H1 (cell line): ENCODE measurements at regions of chr6 and their contacts with region 1.

Region 1: DNA sequence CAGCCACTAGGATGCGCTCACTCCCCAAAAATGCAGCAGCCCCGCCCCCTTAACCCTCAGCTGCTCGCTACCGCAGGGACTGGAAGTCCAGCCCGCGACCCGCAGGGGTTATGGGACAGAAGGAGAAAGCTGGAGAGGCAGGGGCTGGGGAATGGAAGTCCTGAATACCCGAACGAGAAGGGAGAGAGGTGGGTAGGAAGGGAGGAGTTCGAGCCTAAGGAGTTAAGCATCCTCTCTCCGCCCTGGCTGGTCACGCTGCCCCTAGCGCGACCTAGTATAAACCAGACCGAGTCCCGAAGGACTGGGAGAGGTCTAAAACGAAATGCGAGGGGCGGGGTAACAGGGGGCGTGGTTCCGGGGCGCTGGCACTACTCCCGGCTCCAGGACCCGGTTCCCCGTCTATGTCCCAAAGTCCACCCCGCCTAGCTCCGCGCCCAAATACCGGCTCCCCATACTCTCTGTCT is 448 bp upstream of the DDAH2 start:
- DNase-seq: peak; percentile 87 to 96
- H3K4me3 ChIP-seq: peak overlapping the region; percentile 56 to 91 (median 83)
- H3K27ac ChIP-seq: peak overlapping the region; percentile 49; the same call in 1 of the 2 replicates
- H3K4me1 ChIP-seq: peaks cover 8 to 19% (median 11%) of the 10 kb centered on the region in 4 experiments
- H3K27me3 ChIP-seq: no peaks in the 10 kb centered on the region
- CTCF ChIP-seq: peak in 2 of 3 experiments; percentile 86 to 87; a peak in 3 of 4 replicates
- EP300 ChIP-seq: no peak
- POLR2A ChIP-seq: no peak
- RAD21 ChIP-seq: peak; percentile 83 to 90

Region 2: DNA sequence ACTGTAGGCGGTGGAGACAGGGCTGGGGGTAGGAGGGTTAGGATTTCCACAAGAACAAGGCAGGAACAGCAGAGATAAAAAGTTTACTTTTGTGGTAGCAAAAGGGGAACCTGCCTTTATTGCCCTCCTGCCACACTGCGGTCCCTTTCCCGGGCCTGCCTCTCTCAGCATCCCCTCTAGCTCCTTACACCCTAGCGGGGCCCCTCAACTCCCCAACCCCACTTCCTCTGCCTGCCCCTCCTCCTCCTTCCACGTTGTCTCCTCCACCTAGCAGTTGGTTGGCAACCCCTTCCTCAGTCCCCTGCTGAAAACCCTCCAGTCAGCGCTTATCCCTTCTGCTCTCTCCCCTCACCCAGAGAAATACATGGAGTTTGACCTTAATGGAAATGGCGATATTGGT is 113.8 kb before region 1 on chr6:
- CTCF ChIA-PET with region 1: no interaction called
- POLR2A ChIA-PET with region 1: no interaction called
- DNase-seq: no peak
- H3K4me3 ChIP-seq: no peak overlapping the region; a peak in 2 of 8 replicates
- H3K27ac ChIP-seq: no peak overlapping the region
- H3K4me1 ChIP-seq: peaks cover 2 to 12% (median 6%) of the 10 kb centered on the region in 4 experiments; a peak in 6 of 7 replicates
- H3K27me3 ChIP-seq: no peaks in the 10 kb centered on the region
- CTCF ChIP-seq: no peak
- EP300 ChIP-seq: no peak
- POLR2A ChIP-seq: no peak
- RAD21 ChIP-seq: no peak

Region 3: DNA sequence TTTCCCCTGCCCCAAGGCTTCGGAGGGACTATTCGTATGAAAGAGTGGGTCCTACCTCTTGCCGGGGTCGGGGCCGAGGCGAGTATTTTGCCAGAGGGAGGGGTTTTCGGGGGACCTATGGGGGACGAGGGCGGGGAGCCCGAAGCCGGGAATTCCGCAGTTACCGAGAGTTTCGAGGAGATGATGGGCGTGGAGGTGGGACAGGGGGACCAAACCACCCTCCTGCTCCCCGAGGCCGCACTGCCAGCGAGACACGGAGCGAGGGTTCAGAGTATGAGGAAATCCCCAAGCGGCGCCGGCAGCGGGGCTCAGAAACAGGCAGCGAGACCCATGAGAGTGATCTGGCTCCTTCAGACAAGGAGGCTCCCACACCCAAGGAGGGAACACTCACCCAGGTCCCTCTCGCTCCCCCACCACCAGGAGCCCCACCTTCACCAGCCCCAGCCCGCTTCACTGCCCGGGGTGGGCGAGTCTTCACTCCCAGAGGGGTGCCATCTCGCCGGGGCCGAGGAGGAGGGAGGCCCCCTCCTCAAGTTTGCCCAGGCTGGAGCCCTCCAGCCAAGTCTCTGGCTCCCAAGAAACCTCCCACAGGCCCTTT is 97.8 kb before region 1 on chr6:
- CTCF ChIA-PET with region 1: no interaction called
- POLR2A ChIA-PET with region 1: no interaction called
- DNase-seq: no peak
- H3K4me3 ChIP-seq: no peak overlapping the region
- H3K27ac ChIP-seq: no peak overlapping the region
- H3K4me1 ChIP-seq: no peaks in the 10 kb centered on the region
- H3K27me3 ChIP-seq: no peaks in the 10 kb centered on the region
- CTCF ChIP-seq: no peak
- EP300 ChIP-seq: no peak
- POLR2A ChIP-seq: peak in 1 of 2 experiments; percentile 5; a peak in 1 of 3 replicates
- RAD21 ChIP-seq: no peak

Region 4: GRCh38 chr6:31689249-31690110 is 40.1 kb before region 1 on chr6:
- CTCF ChIA-PET with region 1: interaction called, 12 read pairs
- POLR2A ChIA-PET with region 1: interaction called, 6 read pairs
- DNase-seq: peak in 1 of 2 experiments; percentile 81
- H3K4me3 ChIP-seq: no peak overlapping the region
- H3K27ac ChIP-seq: no peak overlapping the region
- H3K4me1 ChIP-seq: peaks cover 0 to 1% (median 0%) of the 10 kb centered on the region in 4 experiments; a peak in 2 of 7 replicates
- H3K27me3 ChIP-seq: no peaks in the 10 kb centered on the region; a peak in 1 of 7 replicates
- CTCF ChIP-seq: peak; percentile 58 to 88 (median 83)
- EP300 ChIP-seq: no peak
- POLR2A ChIP-seq: no peak
- RAD21 ChIP-seq: peak; percentile 50 to 61

Region 5: GRCh38 chr6:31712296-31712695 is 17.3 kb before region 1 on chr6:
- CTCF ChIA-PET with region 1: interaction called, 39 read pairs
- POLR2A ChIA-PET with region 1: interaction called, 22 read pairs
- DNase-seq: no peak
- H3K4me3 ChIP-seq: no peak overlapping the region
- H3K27ac ChIP-seq: no peak overlapping the region
- H3K4me1 ChIP-seq: peaks cover 11 to 18% (median 13%) of the 10 kb centered on the region in 4 experiments
- H3K27me3 ChIP-seq: no peaks in the 10 kb centered on the region; a peak in 1 of 7 replicates
- CTCF ChIP-seq: no peak
- EP300 ChIP-seq: no peak
- POLR2A ChIP-seq: no peak
- RAD21 ChIP-seq: no peak

Region 6: DNA sequence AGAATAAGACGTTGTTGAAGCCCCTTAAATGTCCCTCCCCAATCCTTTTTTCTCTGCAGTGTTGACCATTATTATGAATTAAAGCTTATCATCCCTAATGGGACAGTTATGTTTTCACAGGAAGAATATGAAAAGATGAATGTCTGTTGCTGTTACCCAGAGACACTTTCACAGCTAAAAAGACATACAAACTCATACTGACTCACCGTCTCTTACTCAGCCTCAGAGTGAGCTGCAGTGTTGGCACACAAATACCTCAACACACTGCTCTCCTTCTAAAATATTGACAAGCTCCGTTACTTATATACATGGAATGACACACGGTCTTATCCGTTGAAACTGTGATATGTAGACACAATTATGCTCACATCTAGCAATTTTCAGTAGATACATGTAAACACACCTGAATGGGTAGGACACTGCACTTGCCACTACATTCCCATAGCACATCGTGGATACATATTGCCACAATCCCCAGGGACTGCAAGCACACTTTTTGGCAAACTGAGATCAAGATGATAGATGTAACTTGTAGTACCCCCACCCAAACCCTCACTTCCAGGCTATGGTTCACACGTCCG is 23.3 kb after region 1 on chr6:
- CTCF ChIA-PET with region 1: interaction called, 13 read pairs
- POLR2A ChIA-PET with region 1: interaction called, 3 read pairs
- DNase-seq: no peak
- H3K4me3 ChIP-seq: no peak overlapping the region
- H3K27ac ChIP-seq: no peak overlapping the region
- H3K4me1 ChIP-seq: no peaks in the 10 kb centered on the region
- H3K27me3 ChIP-seq: no peaks in the 10 kb centered on the region
- CTCF ChIP-seq: no peak
- EP300 ChIP-seq: no peak
- POLR2A ChIP-seq: no peak
- RAD21 ChIP-seq: no peak

Region 7: DNA sequence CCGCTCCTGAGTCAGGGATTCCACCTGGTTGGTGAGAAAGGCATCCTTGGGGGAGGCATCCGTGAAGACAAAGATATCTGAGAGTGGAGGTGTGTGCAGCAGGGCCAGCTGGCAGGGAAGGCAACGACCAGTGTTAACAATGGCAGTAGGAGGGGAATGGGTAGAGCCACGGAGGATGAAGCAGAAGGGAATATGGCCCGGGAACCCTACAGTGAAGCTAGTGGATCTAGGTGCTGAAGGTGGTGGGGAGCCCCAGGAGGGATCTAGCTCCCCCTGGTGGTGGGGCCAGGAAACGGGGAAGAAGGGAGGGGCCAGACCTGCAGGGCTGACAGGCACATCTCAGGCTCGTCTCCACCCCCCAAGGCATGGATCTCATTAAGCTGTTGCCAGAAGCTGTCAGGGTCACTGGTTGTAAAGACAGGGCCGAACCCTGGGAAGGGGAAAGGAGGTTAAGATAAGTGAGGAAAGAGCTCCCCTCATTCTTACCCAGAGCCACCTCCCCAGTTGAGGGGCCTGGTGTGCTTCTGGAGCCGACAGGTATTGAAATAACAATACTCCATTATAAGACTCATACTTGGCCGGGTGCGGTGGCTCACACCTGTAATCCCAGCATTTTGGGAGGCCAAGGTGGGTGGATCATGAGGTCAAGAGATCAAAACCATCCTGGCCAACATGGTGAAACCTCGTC is 40.3 kb after region 1 on chr6:
- CTCF ChIA-PET with region 1: interaction called, 89 read pairs
- POLR2A ChIA-PET with region 1: interaction called, 10 read pairs
- DNase-seq: peak; percentile 63 to 96
- H3K4me3 ChIP-seq: no peak overlapping the region
- H3K27ac ChIP-seq: no peak overlapping the region
- H3K4me1 ChIP-seq: peaks cover 0 to 5% (median under 1%) of the 10 kb centered on the region in 4 experiments; a peak in 4 of 7 replicates
- H3K27me3 ChIP-seq: no peaks in the 10 kb centered on the region
- CTCF ChIP-seq: peak in 2 of 3 experiments; percentile 85 to 95; a peak in 3 of 4 replicates
- EP300 ChIP-seq: no peak
- POLR2A ChIP-seq: no peak
- RAD21 ChIP-seq: peak; percentile 73 to 75

Region 8: DNA sequence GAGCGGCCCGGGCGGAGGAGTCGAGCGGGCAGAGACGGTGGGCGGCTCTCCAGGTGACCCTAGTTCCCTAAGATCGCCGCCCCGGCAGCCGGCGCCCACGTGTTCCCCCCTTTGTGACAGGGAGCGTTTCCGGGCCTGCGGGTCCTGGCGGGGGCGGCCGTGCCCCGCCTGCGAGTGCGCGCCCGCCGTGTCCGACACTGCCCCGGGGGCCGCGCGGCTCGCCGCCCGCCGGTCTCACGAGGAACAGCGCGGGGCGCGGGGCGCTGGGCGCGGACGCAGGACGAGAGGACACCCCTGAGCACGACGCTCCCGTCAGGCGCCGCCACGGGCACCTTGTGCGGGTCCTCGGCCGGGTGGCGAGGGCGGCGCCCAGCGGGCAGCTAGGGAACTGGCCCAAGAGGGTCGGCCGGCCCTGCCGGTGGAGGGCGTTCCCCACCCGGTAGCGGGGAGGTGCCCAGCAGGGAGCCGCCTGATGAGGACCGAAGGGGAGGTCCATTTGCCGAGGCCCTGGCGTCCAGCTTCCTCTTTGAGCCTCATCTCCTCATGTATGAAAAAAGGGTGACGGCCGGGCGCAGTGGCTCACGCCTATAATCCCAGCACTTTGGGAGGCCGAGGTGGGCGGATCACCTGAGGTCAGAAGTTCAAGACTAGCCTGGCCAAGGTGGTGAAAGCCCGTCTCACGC is 66.2 kb after region 1 on chr6 and contains the start of gene VARS1:
- CTCF ChIA-PET with region 1: interaction called, 13 read pairs
- POLR2A ChIA-PET with region 1: interaction called, 5 read pairs
- DNase-seq: peak in 1 of 2 experiments; percentile 96
- H3K4me3 ChIP-seq: peak within 1 kb of the TSS; percentile 82 to 95 (median 90)
- H3K27ac ChIP-seq: peak within 1 kb of the TSS; percentile 99
- H3K4me1 ChIP-seq: peaks cover 0 to 2% (median under 1%) of the 10 kb centered on the region in 4 experiments; a peak in 3 of 7 replicates
- H3K27me3 ChIP-seq: no peaks in the 10 kb centered on the region
- CTCF ChIP-seq: peak; percentile 92 to 99 (median 94)
- EP300 ChIP-seq: peak in 1 of 2 experiments; percentile 44; a peak in 1 of 3 replicates
- POLR2A ChIP-seq: peak in 1 of 2 experiments; percentile 72; a peak in 2 of 3 replicates
- RAD21 ChIP-seq: peak; percentile 71 to 79
- total RNA-seq, gene VARS1: 162 and 163 TPM in 2 replicates

Region 9: DNA sequence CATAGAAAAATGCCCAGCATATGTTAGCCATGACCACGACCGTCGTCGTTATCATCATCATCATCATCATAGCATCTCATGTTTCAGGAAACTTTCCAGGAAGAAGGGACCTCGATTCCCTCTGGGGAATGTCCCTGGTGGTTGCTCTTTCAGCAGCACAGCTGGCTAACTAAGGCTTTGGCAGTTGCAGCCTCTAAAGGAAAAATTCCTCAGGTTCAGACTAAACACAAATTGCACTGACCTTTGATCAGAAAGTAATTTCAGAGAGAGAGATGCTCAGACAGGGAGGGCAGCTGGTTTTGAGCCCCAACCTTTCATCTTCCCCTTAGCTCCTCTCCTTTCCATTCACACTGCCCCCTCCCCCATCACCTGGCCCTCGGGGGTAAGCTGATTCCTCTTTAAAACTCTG is 210.7 kb after region 1 on chr6:
- CTCF ChIA-PET with region 1: no interaction called
- POLR2A ChIA-PET with region 1: no interaction called
- DNase-seq: no peak
- H3K4me3 ChIP-seq: no peak overlapping the region
- H3K27ac ChIP-seq: no peak overlapping the region
- H3K4me1 ChIP-seq: 0 out of 7 replicates have a peak, but pooled peaks cover 0 to 2% (median 0%) of the 10 kb centered on the region in 4 experiments
- H3K27me3 ChIP-seq: peaks cover 0 to 6% (median 0%) of the 10 kb centered on the region in 4 experiments; a peak in 1 of 7 replicates
- CTCF ChIP-seq: no peak
- EP300 ChIP-seq: no peak
- POLR2A ChIP-seq: no peak
- RAD21 ChIP-seq: no peak